ENCODE measurements at regions of chr3 and their contacts with region 1.

Region 1: GRCh38 chr3:58249358-58250092 is 11.9 kb downstream of the ABHD6 start:
- DNase-seq: no peak
- H3K4me3 ChIP-seq: no peak overlapping the region
- H3K27ac ChIP-seq: no peak overlapping the region
- H3K4me1 ChIP-seq: no peaks in the 10 kb centered on the region; a peak in 2 of 7 replicates
- H3K27me3 ChIP-seq: no peaks in the 10 kb centered on the region; a peak in 1 of 7 replicates
- CTCF ChIP-seq: peak in 1 of 3 experiments; percentile 21; a peak in 1 of 4 replicates
- EP300 ChIP-seq: no peak
- POLR2A ChIP-seq: no peak
- RAD21 ChIP-seq: 0 out of 4 replicates have a peak, but pooled peaks of 1 of the 2 experiments have one; percentile 4

Region 2: DNA sequence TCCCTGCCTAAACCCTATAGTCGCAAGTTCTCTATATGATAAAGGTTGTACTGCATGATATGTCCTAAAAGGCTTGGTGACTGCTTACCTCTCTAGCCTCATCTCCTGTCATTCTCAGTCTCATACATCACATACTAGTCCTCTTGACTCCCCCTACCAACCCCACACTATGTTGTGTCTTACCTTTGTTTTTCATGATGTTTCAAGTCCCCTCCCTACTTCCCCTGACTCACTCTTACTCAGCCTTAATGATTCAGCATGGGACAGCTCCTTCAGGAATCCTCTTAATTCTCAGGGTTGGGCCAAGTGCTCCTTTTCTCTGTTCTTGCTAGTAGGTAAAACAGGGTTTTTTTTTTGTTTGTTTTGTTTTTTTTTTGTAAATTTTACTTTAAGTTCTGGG is 443.9 kb before region 1 on chr3:
- CTCF ChIA-PET with region 1: no interaction called
- POLR2A ChIA-PET with region 1: no interaction called
- DNase-seq: peak in 1 of 2 experiments; percentile 27
- H3K4me3 ChIP-seq: no peak overlapping the region
- H3K27ac ChIP-seq: no peak overlapping the region
- H3K4me1 ChIP-seq: peaks cover 0 to 16% (median 8%) of the 10 kb centered on the region in 4 experiments; a peak in 5 of 7 replicates
- H3K27me3 ChIP-seq: no peaks in the 10 kb centered on the region
- CTCF ChIP-seq: no peak
- EP300 ChIP-seq: no peak
- POLR2A ChIP-seq: no peak
- RAD21 ChIP-seq: no peak

Region 3: DNA sequence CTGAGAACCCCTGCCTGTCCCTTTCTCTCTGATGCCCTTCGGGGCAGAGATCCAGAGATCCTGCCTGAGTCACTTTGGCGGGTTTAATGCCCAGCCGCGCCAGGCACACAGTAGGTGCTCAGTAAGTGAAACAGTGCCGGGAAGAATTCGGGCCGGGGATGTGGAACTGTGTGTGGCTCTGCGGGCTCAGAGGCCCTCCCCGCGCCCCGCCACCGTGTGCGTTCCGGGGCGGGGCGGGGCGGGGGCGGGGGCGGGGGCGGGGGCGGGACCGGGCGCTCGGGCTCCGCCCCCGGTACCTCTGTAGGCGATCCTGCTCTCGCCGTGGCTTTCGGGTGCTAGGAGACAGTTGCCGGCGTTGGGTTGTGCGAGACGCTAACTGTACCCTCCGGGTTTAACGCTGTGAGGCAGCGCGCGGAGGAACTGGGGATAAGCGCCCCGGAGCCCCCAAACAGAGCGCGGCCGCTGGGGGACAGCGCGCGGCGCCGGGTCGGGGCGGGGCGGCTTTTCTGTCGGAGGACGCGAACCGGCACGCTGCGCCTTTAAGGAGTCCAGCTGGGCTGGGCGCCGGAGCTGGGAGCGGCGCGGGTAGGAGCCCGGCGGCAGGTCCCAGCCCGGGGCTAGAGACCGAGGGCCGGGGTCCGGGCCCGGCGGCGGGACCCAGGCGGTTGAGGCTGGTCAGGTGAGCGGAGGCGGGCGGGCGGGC is 12.1 kb before region 1 on chr3 and contains the start of gene ABHD6:
- CTCF ChIA-PET with region 1: interaction called, 14 read pairs
- POLR2A ChIA-PET with region 1: interaction called, 5 read pairs
- DNase-seq: peak in 1 of 2 experiments; percentile 94
- H3K4me3 ChIP-seq: peak within 1 kb of the TSS; percentile 75 to 90 (median 87)
- H3K27ac ChIP-seq: no peak within 1 kb of the TSS
- H3K4me1 ChIP-seq: peaks cover 0 to 6% (median 3%) of the 10 kb centered on the region in 4 experiments; a peak in 5 of 7 replicates
- H3K27me3 ChIP-seq: peaks cover 9 to 31% (median 30%) of the 10 kb centered on the region in 4 experiments
- CTCF ChIP-seq: peak; percentile 2 to 48 (median 26)
- EP300 ChIP-seq: no peak
- POLR2A ChIP-seq: no peak
- RAD21 ChIP-seq: peak; percentile 52 to 63; a peak in 3 of 4 replicates
- total RNA-seq, gene ABHD6: 5.9 and 6.3 TPM in 2 replicates

Region 4: GRCh38 chr3:58271901-58272501 is 22.5 kb after region 1 on chr3:
- CTCF ChIA-PET with region 1: no interaction called
- POLR2A ChIA-PET with region 1: no interaction called
- DNase-seq: no peak
- H3K4me3 ChIP-seq: no peak overlapping the region
- H3K27ac ChIP-seq: no peak overlapping the region
- H3K4me1 ChIP-seq: no peaks in the 10 kb centered on the region
- H3K27me3 ChIP-seq: no peaks in the 10 kb centered on the region
- CTCF ChIP-seq: no peak
- EP300 ChIP-seq: no peak
- POLR2A ChIP-seq: no peak
- RAD21 ChIP-seq: no peak